Activated naive CD4-positive, alpha-beta T cell treated with anti-CD3 and anti-CD28 coated beads, Interleukin-2, amount 10 ng/mL, durations not matched to agents 7 days and 5 days (primary cell): ENCODE measurements at regions of chr4 and their contacts with region 1.

Region 1: DNA sequence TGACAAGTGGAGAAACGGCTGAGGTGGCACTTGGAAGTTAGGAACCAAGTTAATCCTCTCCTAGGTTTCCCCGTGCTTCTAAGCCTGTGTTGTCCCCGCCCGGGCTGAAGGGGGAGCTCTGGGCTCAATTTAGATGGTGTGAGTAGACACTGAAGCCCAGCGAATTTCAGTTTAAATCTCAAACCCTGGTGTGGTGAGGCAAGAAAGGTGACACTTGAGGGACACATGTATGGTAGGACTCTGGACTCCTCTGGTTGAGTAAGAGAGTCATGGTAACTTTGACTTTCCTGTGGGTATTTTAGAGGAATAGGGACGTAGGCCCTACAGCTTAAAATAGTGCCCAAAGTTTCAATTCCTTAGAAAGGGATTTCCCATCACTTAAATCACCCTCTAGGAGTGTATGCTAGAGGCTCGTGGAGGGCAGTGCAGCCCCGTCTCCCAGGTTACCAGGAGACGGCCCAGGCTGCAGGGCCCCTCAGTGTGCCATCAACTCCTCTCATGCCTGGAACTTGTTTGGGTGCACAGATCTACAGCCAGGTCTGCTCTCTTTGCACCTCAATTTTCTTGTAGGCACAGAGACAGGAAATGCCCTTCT is 24.0 kb downstream of the HAND2 start:
- DNase-seq: peak; percentile 73
- H3K4me3 Mint-ChIP-seq: no peak overlapping the region
- H3K27ac Mint-ChIP-seq: no peak overlapping the region
- H3K4me1 Mint-ChIP-seq: peaks cover 50% of the 10 kb centered on the region
- H3K27me3 Mint-ChIP-seq: peaks cover 100% of the 10 kb centered on the region

Region 2: DNA sequence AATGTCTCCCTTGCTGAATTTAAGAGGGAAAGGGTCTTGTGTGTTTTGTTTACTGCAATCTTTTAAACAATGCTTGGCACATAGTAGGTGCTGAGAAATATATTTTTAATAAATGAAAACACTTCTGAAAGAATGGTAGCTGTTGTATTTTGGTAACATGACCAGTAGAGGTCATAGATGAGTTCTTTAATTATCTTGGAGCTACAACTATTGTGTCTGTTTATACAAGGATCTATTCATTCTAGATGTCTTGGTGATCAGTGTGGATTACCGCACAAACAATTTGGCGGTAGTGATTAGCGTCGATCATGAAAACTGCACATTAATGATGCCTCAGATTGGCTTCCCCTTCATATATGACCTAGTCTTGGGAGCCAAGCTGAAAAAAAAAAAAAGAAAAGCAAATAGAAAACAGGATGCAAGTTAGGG is 85.7 kb before region 1 on chr4:
- CTCF ChIA-PET with region 1: interaction called, 12 read pairs
- DNase-seq: no peak
- H3K4me3 Mint-ChIP-seq: no peak overlapping the region
- H3K27ac Mint-ChIP-seq: no peak overlapping the region
- H3K4me1 Mint-ChIP-seq: peaks cover 16% of the 10 kb centered on the region
- H3K27me3 Mint-ChIP-seq: peaks cover 13% of the 10 kb centered on the region

Region 3: GRCh38 chr4:173494013-173494970 is 11.7 kb before region 1 on chr4:
- CTCF ChIA-PET with region 1: interaction called, 10 read pairs
- DNase-seq: peak; percentile 76
- H3K4me3 Mint-ChIP-seq: peak overlapping the region; percentile 67
- H3K27ac Mint-ChIP-seq: no peak overlapping the region
- H3K4me1 Mint-ChIP-seq: peaks cover 31% of the 10 kb centered on the region
- H3K27me3 Mint-ChIP-seq: peaks cover 43% of the 10 kb centered on the region

Region 4: DNA sequence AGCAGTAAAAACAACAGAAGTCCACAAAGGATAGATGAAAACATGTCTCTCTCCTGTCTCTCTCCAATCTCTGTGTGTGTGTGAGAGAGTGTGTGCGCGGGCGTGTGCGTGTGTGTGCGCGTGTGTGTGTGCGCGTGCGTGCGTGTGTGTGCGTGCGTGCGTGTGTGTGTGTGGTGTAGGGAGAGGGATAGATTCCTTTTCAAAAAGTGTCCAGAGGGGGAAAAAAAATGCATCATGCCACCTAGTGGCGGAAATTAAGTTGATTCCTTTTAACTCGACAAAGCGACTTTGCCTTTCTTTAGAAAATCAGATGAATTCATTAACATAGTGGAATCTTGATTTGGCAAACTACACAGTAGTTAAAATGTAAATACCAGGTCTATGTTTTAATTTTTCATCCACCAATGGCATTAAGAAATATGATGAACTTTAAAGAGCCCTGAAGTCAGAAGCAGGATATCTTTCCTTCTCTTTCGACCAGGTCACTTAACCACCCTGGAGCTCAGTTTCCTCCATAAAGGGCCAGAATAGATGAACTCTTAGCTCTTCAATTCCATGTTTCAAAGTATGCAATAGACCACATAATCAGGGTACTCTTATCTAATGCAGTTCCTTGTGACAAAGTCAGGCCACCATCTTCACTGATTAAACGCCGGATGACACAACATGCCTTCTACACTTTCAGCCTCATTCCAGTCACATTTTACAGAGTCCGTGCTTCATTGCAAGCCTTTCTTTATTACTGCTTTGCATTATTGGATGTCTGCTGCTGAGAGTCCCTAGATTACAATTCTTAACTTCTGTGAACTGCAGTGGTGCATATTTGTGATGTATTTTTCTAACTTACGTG is 614.6 kb after region 1 on chr4:
- CTCF ChIA-PET with region 1: interaction called, 11 read pairs
- DNase-seq: peak; percentile 28
- H3K4me3 Mint-ChIP-seq: no peak overlapping the region
- H3K27ac Mint-ChIP-seq: no peak overlapping the region
- H3K4me1 Mint-ChIP-seq: peaks cover 2% of the 10 kb centered on the region
- H3K27me3 Mint-ChIP-seq: peaks cover 23% of the 10 kb centered on the region